Tibial artery (tissue), 4 donors: ENCODE measurements at regions of chr6 and their contacts with region 1.

Region 1: DNA sequence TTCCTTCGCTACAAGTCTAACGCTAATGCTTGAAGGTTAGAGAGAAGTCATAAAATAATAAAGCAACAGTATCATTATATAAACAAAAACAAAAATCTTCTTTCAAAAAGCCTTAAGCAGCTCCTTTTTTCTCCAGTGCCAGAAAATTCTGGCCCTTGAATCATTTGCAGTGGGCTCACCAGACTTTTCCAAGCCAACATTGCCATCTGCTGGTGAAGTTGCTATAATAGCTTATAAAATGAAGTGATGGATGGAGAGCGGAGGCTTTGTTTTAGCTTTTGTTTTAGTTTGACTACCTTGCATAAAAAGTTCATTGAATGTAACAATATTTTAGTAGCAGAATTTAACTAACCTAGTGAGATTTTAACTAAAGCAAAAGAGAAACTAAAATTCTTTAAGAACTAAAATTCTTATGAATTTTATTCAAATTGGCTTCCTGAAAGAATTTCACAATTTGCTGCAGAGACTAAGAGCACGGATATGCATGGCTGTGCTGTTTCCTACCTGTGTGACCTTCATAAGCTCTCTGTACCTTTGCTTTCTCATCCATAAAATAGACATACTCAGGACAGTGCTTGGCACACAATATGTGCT is 44.8 kb upstream of the SLC2A12 start:
- DNase-seq: peak in 1 of 2 donors; percentile 51
- H3K4me3 ChIP-seq: no peak overlapping the region
- H3K27ac ChIP-seq: no peak overlapping the region
- H3K4me1 ChIP-seq: no peaks in the 10 kb centered on the region
- H3K27me3 ChIP-seq: peaks cover 0 to 3% of the 10 kb centered on the region in 2 donors
- CTCF ChIP-seq: peak; percentile 51 to 77

Region 2: GRCh38 chr6:133568970-133569889 is 528.0 kb before region 1 on chr6:
- intact Hi-C with region 1: loop called (anchors 10 kb)
- DNase-seq: no peak
- H3K4me3 ChIP-seq: peak overlapping the region; percentile 41
- H3K27ac ChIP-seq: no peak overlapping the region
- H3K4me1 ChIP-seq: peaks cover 0 to 8% (median 0%) of the 10 kb centered on the region in 4 donors
- H3K27me3 ChIP-seq: peaks cover 0 to 5% of the 10 kb centered on the region in 2 donors
- CTCF ChIP-seq: peak; percentile 98

Region 3: DNA sequence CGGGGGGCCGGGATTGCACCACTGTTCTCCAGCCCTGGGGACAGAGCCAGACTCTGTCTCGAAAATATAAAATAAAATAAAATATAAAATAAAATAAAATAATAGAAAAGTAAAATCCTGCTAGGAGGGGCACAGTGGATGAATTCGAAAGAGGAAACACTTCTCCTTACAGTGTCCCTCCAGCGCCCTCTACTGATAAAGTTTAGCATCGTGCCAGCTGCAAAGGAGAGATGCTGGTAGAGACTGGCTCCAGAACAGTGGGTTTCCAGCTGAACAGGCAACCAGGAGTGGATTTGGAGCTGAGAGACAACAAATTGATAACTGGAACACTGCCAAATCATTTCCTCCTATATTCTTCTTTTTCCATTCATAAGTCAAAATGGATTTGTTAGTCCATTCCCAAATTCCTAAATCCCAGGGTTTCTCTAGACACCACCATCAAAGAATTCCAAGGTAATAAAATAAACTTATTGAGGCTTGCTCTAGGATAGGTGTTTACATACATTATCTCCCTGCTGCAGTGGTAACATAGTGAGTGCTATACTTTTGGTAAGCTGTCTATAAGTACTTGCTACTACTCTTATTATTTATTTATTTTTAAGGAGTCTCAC is 175.9 kb before region 1 on chr6:
- intact Hi-C with region 1: loop called (anchors 2 kb)
- DNase-seq: peak; percentile 86 to 92
- H3K4me3 ChIP-seq: no peak overlapping the region
- H3K27ac ChIP-seq: no peak overlapping the region
- H3K4me1 ChIP-seq: no peaks in the 10 kb centered on the region
- H3K27me3 ChIP-seq: peaks cover 0 to 7% of the 10 kb centered on the region in 2 donors
- CTCF ChIP-seq: peak; percentile 73 to 88

Region 4: DNA sequence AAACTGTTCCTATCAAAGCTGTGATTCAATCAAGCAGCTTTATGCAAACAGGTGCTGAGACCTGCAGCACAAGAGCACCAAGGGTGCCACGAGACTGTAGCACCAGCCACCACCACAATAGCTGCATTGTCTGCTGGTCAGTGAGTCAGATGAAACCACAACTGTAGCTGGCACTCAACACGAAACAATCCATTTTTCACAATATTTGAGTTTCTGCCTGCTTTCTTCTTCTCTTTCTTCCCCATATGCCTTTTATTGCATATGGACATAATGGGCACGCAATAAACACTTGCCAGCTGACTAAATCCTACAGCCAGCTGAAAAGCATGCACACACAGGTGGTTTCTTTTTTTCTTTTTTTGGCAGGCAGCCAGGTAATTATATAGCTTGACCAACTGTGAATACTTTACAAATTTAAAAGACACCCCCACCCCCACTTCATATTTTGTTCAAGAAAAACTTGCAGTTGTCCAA is 61.4 kb before region 1 on chr6:
- intact Hi-C with region 1: no loop called
- DNase-seq: no peak
- H3K4me3 ChIP-seq: no peak overlapping the region
- H3K27ac ChIP-seq: peak overlapping the region; percentile 37 to 50
- H3K4me1 ChIP-seq: peaks cover 0 to 17% (median 7%) of the 10 kb centered on the region in 4 donors
- H3K27me3 ChIP-seq: no peaks in the 10 kb centered on the region
- CTCF ChIP-seq: no peak

Region 5: DNA sequence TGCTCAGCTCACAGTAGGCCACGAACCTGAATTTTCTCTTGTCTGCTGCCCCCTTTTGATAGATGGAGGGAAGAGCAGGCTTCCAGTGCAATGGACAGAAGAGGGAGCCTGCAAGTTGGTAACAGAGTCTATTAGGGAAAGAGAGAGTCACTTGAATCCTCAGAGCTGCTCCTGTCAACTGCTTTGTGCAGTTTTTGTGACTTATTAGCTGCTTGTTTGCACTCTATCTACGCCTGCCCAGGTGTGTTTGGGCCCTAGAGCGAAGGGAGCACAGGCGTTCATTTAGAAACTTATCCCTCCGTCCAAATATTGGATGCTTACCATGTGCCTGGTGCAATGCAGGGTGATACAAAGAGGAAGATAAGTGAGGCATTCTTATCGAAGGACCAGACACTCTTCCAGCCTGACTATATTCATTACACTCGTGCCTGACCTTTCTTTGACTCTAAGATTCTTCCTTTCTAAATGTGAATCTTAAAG is 33.2 kb before region 1 on chr6:
- intact Hi-C with region 1: loop called (anchors 2 kb)
- DNase-seq: peak; percentile 70 to 82
- H3K4me3 ChIP-seq: no peak overlapping the region
- H3K27ac ChIP-seq: peak overlapping the region; percentile 53 to 66
- H3K4me1 ChIP-seq: peaks cover 0 to 34% (median 13%) of the 10 kb centered on the region in 4 donors
- H3K27me3 ChIP-seq: no peaks in the 10 kb centered on the region
- CTCF ChIP-seq: peak; percentile 86 to 89

Region 6: GRCh38 chr6:134267917-134268361 is 170.7 kb after region 1 on chr6:
- intact Hi-C with region 1: no loop called
- DNase-seq: no peak
- H3K4me3 ChIP-seq: no peak overlapping the region
- H3K27ac ChIP-seq: no peak overlapping the region
- H3K4me1 ChIP-seq: no peaks in the 10 kb centered on the region
- H3K27me3 ChIP-seq: no peaks in the 10 kb centered on the region
- CTCF ChIP-seq: no peak